Prostate gland (tissue), 2 donors: ENCODE measurements at regions of chr1 and their contacts with region 1.

Region 1: DNA sequence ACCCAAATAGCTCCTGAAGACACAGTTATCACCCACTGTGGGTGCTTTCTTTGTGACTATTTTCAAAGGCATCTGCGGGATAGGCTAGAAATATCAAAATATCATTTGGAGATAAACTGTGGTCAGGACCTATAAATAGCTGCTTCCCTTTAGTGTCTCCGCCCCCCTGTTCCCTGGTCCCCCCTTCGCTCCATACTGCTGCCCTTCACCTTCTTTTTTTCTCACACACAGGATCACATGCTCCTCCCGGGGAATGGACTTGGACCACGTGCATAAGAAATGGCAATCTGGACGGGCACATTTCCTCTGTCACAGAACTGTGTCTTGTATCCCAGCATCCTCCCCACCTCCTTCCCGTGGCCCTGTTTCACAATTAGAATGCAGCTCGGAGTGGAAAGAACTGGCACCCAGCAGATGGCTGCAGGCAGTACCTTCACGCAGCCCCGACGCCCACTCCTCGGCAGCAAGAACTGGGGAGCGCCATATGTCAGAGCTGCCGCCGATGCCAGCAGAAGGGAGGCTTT is 68.8 kb upstream of the SSX2IP start:
- DNase-seq: no peak
- H3K4me3 ChIP-seq: peak overlapping the region in 1 of 2 donors; percentile 12
- H3K27ac ChIP-seq: no peak overlapping the region
- H3K4me1 ChIP-seq: no peaks in the 10 kb centered on the region
- H3K27me3 ChIP-seq: no peaks in the 10 kb centered on the region
- CTCF ChIP-seq: no peak
- POLR2A ChIP-seq: no peak

Region 2: GRCh38 chr1:84442256-84442655 is 316.8 kb before region 1 on chr1:
- intact Hi-C with region 1: loop called (anchors 5 kb)
- DNase-seq: peak; percentile 15
- H3K4me3 ChIP-seq: no peak overlapping the region
- H3K27ac ChIP-seq: no peak overlapping the region
- H3K4me1 ChIP-seq: no peaks in the 10 kb centered on the region
- H3K27me3 ChIP-seq: no peaks in the 10 kb centered on the region
- CTCF ChIP-seq: peak in 3 of 4 experiments; percentile 41 to 81 (median 75)
- POLR2A ChIP-seq: no peak